Heart left ventricle (tissue), 16 donors: ENCODE measurements at regions of chr5 and their contacts with region 1.

Region 1: GRCh38 chr5:32504989-32505596 is 60.6 kb upstream of the ZFR start:
- DNase-seq: peak; percentile 58 to 63 (median 62)
- ATAC-seq: peak; percentile 77 to 88 (median 82)
- H3K4me3 ChIP-seq: peak overlapping the region in 1 of 12 donors; percentile 1
- H3K27ac ChIP-seq: peak overlapping the region in 6 of 12 donors; percentile 8 to 73 (median 19)
- H3K4me1 ChIP-seq: peaks cover 0 to 43% (median 27%) of the 10 kb centered on the region in 12 donors
- H3K27me3 ChIP-seq: peaks cover 0 to 5% (median 0%) of the 10 kb centered on the region in 9 donors
- CTCF ChIP-seq: no peak
- POLR2A ChIP-seq: no peak

Region 2: GRCh38 chr5:32232441-32233219 is 272.5 kb before region 1 on chr5:
- intact Hi-C with region 1: no loop called
- DNase-seq: peak; percentile 73 to 80 (median 75)
- ATAC-seq: peak; percentile 84 to 90 (median 86)
- H3K4me3 ChIP-seq: no peak overlapping the region
- H3K27ac ChIP-seq: peak overlapping the region in 8 of 12 donors; percentile 8 to 72 (median 28)
- H3K4me1 ChIP-seq: peaks cover 0 to 38% (median 22%) of the 10 kb centered on the region in 12 donors
- H3K27me3 ChIP-seq: no peaks in the 10 kb centered on the region
- CTCF ChIP-seq: peak; percentile 69 to 88 (median 81)
- POLR2A ChIP-seq: no peak

Region 3: GRCh38 chr5:32545102-32545800 is 40.2 kb after region 1 on chr5:
- intact Hi-C with region 1: no loop called
- DNase-seq: no peak
- ATAC-seq: no peak
- H3K4me3 ChIP-seq: no peak overlapping the region
- H3K27ac ChIP-seq: no peak overlapping the region
- H3K4me1 ChIP-seq: peaks cover 0 to 23% (median 0%) of the 10 kb centered on the region in 12 donors
- H3K27me3 ChIP-seq: no peaks in the 10 kb centered on the region
- CTCF ChIP-seq: no peak
- POLR2A ChIP-seq: no peak

Region 4: GRCh38 chr5:32585446-32586275 is 80.6 kb after region 1 on chr5 and contains the start of gene SUB1:
- intact Hi-C with region 1: loop called in 2 of 10 experiments (anchors 5 kb)
- DNase-seq: peak; percentile 95 to 97 (median 96)
- ATAC-seq: peak; percentile 92 to 96 (median 95)
- H3K4me3 ChIP-seq: peak within 1 kb of the TSS; percentile 85 to 98 (median 93)
- H3K27ac ChIP-seq: peak within 1 kb of the TSS; percentile 93 to 100 (median 99)
- H3K4me1 ChIP-seq: peaks cover 4 to 77% (median 14%) of the 10 kb centered on the region in 12 donors
- H3K27me3 ChIP-seq: no peaks in the 10 kb centered on the region
- CTCF ChIP-seq: peak in 2 of 12 donors; percentile 20 to 22
- POLR2A ChIP-seq: peak in 1 of 2 donors; percentile 69
- total RNA-seq, gene SUB1: 118 to 244 (median 197) TPM

Region 5: DNA sequence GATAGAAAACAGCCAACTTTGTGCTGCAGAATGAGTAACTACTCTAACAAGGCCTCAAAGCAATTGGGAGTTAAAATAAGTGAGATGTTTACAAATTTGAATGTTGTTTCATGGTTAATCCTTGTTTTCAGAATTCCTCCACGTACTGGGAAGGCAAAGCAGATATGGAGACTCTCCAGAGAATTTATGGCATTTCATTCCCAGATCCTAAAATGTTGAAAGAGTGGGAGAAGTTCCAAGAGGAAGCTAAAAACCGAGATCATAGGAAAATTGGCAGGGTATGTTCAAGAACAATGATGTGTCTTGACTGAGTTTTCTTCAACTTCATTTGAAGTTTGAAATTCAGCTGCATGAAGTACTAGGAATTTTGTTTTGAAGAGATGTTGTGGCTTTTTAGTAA is 952.0 kb after region 1 on chr5:
- intact Hi-C with region 1: no loop called
- DNase-seq: no peak
- ATAC-seq: peak in 1 of 4 donors; percentile 11
- H3K4me3 ChIP-seq: no peak overlapping the region
- H3K27ac ChIP-seq: peak overlapping the region in 1 of 12 donors; percentile 6
- H3K4me1 ChIP-seq: peaks cover 0 to 16% (median 5%) of the 10 kb centered on the region in 12 donors
- H3K27me3 ChIP-seq: no peaks in the 10 kb centered on the region
- CTCF ChIP-seq: no peak
- POLR2A ChIP-seq: no peak